ENCODE measurements at regions of chr16 and their contacts with region 1.

Region 1: DNA sequence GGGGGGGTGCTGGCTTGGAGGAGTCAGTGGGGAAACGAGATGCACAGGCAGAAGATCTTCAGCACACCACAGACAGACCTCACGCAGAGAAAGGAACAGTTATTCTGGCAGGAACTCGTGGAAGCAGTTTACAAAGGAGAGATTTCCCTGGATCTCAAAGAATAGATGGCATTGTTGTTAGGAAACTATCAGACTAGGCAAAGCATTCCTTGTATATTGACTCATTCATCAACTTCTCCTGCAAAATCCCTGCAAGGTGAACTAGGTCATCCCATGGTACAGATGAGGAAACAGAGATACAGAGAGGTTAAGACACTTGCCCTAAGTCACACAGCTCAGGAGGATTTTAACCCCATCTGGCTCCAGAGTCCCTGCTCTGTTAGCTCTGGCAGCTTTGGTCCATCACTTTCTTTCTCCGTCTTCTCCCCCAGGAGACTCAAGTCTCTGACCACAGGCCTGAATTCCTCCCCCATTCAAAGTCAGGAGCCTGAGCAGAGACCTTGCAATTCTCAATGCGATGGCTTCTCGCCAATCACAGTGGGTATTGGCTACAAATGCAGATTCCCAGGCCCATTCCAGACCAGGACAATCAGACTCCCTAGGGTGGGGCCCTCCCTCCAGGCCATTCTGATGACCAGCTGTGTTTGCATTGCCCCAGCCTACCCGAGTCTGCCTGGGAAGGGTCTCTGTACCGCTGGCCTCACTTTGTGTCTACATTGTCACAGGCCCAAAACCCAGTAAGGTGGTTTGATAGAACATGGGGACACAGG is 56.4 kb downstream of the LITAF start:
- DNase-seq: no peak

Region 2: GRCh38 chr16:11639925-11640899 is 109.9 kb after region 1 on chr16:
- CTCF ChIA-PET with region 1: interaction called, 14 read pairs
- POLR2A ChIA-PET with region 1: no interaction called
- DNase-seq: peak; percentile 31

Measured in HEK293T (cell line).